ENCODE measurements at regions of chr18 and their contacts with region 1.

Region 1: GRCh38 chr18:62566199-62566598 is 43.4 kb downstream of the ZCCHC2 start:
- DNase-seq: peak; percentile 75 to 82 (median 81)
- H3K4me3 ChIP-seq: no peak overlapping the region
- H3K27ac ChIP-seq: no peak overlapping the region
- H3K4me1 ChIP-seq: no peaks in the 10 kb centered on the region
- H3K27me3 ChIP-seq: no peaks in the 10 kb centered on the region

Region 2: DNA sequence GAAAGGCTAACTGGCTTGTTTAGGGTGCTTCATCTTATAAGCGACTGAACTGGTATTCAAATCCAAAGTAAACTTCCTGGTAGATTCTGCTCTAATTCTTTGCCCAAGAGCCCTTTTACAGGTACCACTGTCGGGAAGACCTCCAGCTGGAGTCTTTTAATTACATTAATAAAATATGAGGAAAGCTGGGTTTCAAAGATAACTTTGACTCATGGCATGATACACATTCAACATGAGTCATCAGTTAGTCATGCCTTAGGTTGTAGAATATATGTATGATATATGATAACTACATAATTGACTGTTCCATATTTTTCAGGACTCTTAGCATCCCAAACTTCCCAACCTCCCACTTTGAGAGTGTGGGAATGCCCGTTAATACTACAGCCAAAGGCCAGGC is 11.1 kb before region 1 on chr18:
- CTCF ChIA-PET with region 1: interaction called, 12 read pairs
- POLR2A ChIA-PET with region 1: no interaction called
- DNase-seq: peak in 2 of 3 donors; percentile 14 to 22
- H3K4me3 ChIP-seq: no peak overlapping the region
- H3K27ac ChIP-seq: no peak overlapping the region
- H3K4me1 ChIP-seq: peaks cover 0 to 10% (median 8%) of the 10 kb centered on the region in 4 experiments
- H3K27me3 ChIP-seq: no peaks in the 10 kb centered on the region

Region 3: DNA sequence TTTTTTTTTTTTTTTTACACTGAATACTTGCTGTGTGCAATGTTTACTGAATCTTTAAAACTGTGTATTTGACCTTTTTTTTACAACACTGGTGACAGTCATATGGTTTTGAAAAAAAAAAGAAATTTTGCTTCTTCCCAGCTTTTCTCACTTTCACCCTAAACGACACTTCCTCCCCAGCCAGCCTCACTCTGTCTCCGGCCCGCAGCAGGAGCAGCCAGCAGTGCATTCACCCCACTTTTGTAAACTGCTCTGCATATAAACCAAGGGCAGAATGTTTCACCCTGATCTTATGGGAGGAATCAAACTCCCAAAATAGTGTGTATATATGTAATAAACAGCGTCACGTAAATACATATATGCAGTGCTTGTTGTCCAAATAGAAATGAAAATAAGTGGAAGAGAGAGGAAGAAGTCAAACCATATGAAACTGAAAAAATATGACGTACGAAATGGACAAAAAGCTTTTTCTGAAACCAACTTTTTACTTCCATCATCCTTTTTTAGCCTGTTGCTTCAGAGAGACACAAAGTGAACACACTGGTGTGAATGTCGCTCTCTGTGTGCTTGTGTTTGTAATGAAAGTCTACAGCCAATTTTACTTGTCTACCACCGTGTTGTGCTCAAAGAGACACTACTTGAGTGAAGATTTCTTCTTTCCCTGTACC is 10.8 kb after region 1 on chr18:
- CTCF ChIA-PET with region 1: interaction called, 14 read pairs
- POLR2A ChIA-PET with region 1: interaction called, 5 read pairs
- DNase-seq: no peak
- H3K4me3 ChIP-seq: no peak overlapping the region
- H3K27ac ChIP-seq: no peak overlapping the region
- H3K4me1 ChIP-seq: no peaks in the 10 kb centered on the region
- H3K27me3 ChIP-seq: no peaks in the 10 kb centered on the region

Region 4: GRCh38 chr18:62729487-62730386 is 163.5 kb after region 1 on chr18:
- CTCF ChIA-PET with region 1: no interaction called
- POLR2A ChIA-PET with region 1: no interaction called
- DNase-seq: no peak
- H3K4me3 ChIP-seq: no peak overlapping the region
- H3K27ac ChIP-seq: no peak overlapping the region
- H3K4me1 ChIP-seq: peaks cover 0 to 10% (median 4%) of the 10 kb centered on the region in 4 experiments
- H3K27me3 ChIP-seq: no peaks in the 10 kb centered on the region

Region 5: GRCh38 chr18:62784966-62785413 is 218.8 kb after region 1 on chr18:
- CTCF ChIA-PET with region 1: no interaction called
- POLR2A ChIA-PET with region 1: no interaction called
- DNase-seq: peak in 1 of 3 donors; percentile 29
- H3K4me3 ChIP-seq: peak overlapping the region in 2 of 7 experiments; percentile 24 to 62
- H3K27ac ChIP-seq: no peak overlapping the region
- H3K4me1 ChIP-seq: peaks cover 4 to 23% (median 13%) of the 10 kb centered on the region in 4 experiments
- H3K27me3 ChIP-seq: no peaks in the 10 kb centered on the region